Activated CD8-positive, alpha-beta T cell treated with anti-CD3 and anti-CD28 coated beads, Interleukin-2, amount 10 ng/mL, durations not matched to agents 7 days and 5 days (primary cell): ENCODE measurements at regions of chr6 and their contacts with region 1.

Region 1: DNA sequence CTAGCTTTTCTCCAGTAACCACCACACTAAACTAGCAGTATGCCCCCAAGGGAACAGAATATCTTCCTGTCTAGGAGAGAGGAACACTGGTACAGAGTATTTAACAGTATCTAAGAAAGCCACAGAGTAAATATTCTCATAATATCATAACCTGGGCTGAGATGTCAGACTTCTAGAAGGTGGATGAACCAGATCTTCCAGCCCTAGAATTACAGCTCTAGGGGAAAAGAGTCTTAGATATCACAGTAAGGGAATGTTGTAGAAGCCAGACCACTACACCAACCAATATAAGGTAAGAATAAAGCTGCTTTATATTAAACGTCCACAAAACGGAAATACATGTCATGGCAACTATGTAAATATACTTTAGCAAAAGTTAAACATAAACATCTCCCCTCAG is 12.4 kb downstream of the SERINC1 start:
- DNase-seq: no peak
- ATAC-seq: no peak
- H3K4me3 Mint-ChIP-seq: no peak overlapping the region
- H3K27ac Mint-ChIP-seq: peak overlapping the region; percentile 46
- H3K4me1 Mint-ChIP-seq: peaks cover 43% of the 10 kb centered on the region
- H3K27me3 Mint-ChIP-seq: no peaks in the 10 kb centered on the region

Region 2: DNA sequence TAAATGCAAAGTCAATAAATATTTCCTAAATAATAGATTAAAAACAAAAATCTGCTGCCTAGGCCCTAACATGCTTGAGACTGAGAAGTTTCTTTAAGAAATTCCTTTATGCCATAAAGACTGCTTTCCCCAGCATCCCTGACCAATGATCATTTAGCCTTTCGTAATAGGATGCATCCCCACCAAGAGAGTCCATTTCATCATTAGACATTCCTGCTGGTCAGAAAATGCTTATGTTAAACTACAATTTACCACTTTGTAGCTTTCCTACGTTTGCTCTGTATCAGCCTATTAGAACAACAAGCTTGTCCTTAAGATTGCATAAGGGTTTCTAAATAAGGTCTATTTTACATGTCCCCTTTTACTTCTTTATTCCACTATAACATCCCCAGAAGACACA is 119.6 kb before region 1 on chr6:
- CTCF ChIA-PET with region 1: no interaction called
- POLR2A ChIA-PET with region 1: no interaction called
- DNase-seq: no peak
- ATAC-seq: no peak
- H3K4me3 Mint-ChIP-seq: no peak overlapping the region
- H3K27ac Mint-ChIP-seq: no peak overlapping the region
- H3K4me1 Mint-ChIP-seq: no peaks in the 10 kb centered on the region
- H3K27me3 Mint-ChIP-seq: peaks cover 7% of the 10 kb centered on the region

Region 3: GRCh38 chr6:122428781-122429180 is 30.4 kb before region 1 on chr6:
- CTCF ChIA-PET with region 1: no interaction called
- POLR2A ChIA-PET with region 1: no interaction called
- DNase-seq: no peak
- ATAC-seq: no peak
- H3K4me3 Mint-ChIP-seq: no peak overlapping the region
- H3K27ac Mint-ChIP-seq: no peak overlapping the region
- H3K4me1 Mint-ChIP-seq: no peaks in the 10 kb centered on the region
- H3K27me3 Mint-ChIP-seq: no peaks in the 10 kb centered on the region

Region 4: GRCh38 chr6:122471107-122472021 is 12.2 kb after region 1 on chr6 and contains the start of gene SERINC1:
- CTCF ChIA-PET with region 1: no interaction called
- POLR2A ChIA-PET with region 1: interaction called, 15 read pairs
- DNase-seq: peak; percentile 95
- ATAC-seq: peak; percentile 99
- H3K4me3 Mint-ChIP-seq: peak within 1 kb of the TSS; percentile 94
- H3K27ac Mint-ChIP-seq: peak within 1 kb of the TSS; percentile 99
- H3K4me1 Mint-ChIP-seq: peaks cover 23% of the 10 kb centered on the region
- H3K27me3 Mint-ChIP-seq: no peaks in the 10 kb centered on the region
- total RNA-seq, gene SERINC1: 41.9 to 44.9 TPM